ENCODE measurements at regions of chr6 and their contacts with region 1.

Region 1: DNA sequence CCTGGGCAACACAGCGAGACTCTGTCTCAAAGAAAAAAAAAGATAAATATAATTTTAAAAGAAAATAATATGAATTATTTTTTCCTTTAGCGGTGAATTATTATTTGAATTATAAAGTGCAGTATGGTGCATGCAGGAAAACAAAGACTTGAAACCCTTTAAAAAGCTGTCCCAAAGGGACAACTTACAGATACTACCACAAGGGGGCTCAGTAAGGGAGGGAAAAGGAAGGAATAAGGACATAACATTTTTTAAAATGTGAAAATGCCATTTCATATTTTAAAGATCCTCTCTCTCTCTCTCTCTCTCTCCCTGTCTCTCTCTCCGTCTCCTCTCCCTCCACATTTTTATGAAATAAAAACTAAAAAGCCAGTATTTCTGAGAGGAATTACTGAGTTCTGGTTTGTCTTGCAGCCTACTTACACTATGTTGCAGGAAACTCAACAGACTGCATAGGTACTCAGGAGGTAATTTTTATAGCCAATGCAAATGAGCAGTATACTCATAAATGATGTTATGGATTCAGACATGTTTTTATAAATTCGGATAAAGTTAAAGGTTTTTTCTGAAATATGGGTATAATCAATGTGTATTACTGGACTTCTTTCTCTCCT is 455.0 kb upstream of the GJE1 start:
- DNase-seq: no peak
- H3K4me3 ChIP-seq: no peak overlapping the region
- H3K27me3 ChIP-seq: no peaks in the 10 kb centered on the region
- CTCF ChIP-seq: peak; percentile 71

Region 2: DNA sequence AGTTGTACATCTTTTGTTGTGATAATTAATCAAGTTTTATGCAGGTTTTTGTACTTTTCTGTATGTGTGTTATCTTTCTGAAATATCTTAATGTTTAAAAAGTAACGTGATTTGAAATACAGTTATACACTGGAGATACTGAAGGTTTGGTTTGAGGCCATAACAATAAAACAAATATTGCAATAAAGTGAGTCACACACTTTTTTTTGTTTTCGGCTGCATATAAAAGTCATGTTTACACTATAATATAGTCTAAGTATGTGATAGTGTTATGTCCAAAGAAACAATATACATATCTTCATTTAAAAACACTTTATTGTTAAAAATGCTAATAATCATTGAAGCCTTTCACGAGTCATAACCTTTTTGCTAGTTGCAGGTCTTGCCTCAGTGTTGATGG is 18.1 kb before region 1 on chr6:
- CTCF ChIA-PET with region 1: interaction called, 11 read pairs
- POLR2A ChIA-PET with region 1: no interaction called
- DNase-seq: no peak
- H3K4me3 ChIP-seq: no peak overlapping the region
- H3K27me3 ChIP-seq: no peaks in the 10 kb centered on the region
- CTCF ChIP-seq: no peak

Region 3: GRCh38 chr6:142112451-142113061 is 434.9 kb after region 1 on chr6:
- CTCF ChIA-PET with region 1: interaction called, 10 read pairs
- POLR2A ChIA-PET with region 1: no interaction called
- DNase-seq: peak; percentile 10
- H3K4me3 ChIP-seq: no peak overlapping the region
- H3K27me3 ChIP-seq: no peaks in the 10 kb centered on the region
- CTCF ChIP-seq: peak; percentile 77

Region 4: GRCh38 chr6:143205991-143206390 is 1528.3 kb after region 1 on chr6:
- CTCF ChIA-PET with region 1: no interaction called
- POLR2A ChIA-PET with region 1: no interaction called
- DNase-seq: no peak
- H3K4me3 ChIP-seq: no peak overlapping the region
- H3K27me3 ChIP-seq: no peaks in the 10 kb centered on the region
- CTCF ChIP-seq: no peak